Posterior vena cava (tissue), 2 donors: ENCODE measurements at regions of chr9 and their contacts with region 1.

Region 1: DNA sequence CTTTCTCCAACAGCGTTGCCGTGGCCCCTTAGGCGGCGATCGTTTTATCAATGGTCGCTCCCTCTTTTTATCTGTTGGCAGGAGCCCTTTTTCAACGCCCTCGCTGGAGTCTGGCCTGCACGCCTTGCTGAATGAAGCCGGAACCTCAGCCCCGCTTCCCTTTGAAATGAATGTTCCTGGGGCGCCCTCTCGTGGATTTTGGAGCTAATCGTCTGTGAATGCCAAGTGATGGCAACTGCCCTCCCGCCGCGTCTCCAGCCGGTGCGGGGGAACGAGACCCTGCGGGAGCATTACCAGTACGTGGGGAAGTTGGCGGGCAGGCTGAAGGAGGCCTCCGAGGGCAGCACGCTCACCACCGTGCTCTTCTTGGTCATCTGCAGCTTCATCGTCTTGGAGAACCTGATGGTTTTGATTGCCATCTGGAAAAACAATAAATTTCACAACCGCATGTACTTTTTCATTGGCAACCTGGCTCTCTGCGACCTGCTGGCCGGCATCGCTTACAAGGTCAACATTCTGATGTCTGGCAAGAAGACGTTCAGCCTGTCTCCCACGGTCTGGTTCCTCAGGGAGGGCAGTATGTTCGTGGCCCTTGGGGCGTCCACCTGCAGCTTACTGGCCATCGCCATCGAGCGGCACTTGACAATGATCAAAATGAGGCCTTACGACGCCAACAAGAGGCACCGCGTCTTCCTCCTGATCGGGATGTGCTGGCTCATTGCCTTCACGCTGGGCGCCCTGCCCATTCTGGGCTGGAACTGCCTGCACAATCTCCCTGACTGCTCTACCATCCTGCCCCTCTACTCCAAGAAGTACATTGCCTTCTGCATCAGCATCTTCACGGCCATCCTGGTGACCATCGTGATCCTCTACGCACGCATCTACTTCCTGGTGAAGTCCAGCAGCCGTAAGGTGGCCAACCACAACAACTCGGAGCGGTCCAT is 10.0 kb downstream of the S1PR3 start:
- DNase-seq: peak; percentile 96

Region 2: GRCh38 chr9:88593537-88594185 is 407.6 kb before region 1 on chr9:
- intact Hi-C with region 1: loop called (anchors 2 to 5 kb)
- DNase-seq: no peak

Region 3: DNA sequence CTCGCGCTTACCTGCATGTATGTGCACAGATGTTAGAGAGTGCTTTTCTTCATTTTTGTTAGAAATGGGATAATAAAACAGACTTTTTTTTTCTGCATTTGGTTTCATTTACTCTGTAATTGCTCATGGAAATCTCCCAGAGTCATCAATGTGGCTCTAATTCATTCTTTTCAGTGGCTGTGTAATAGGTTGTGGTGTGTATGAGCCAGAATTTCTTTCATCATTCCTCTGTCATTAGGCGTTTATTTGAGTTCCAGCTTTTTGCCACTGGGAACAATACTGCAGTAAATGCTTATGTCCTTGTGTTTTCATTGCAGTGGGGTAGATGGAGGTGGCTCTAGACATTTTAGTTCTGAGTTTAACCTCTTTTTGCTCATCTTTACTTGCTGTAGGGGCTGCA is 347.3 kb before region 1 on chr9:
- intact Hi-C with region 1: loop called in 1 of 2 experiments (anchors 2 kb)
- DNase-seq: no peak

Region 4: DNA sequence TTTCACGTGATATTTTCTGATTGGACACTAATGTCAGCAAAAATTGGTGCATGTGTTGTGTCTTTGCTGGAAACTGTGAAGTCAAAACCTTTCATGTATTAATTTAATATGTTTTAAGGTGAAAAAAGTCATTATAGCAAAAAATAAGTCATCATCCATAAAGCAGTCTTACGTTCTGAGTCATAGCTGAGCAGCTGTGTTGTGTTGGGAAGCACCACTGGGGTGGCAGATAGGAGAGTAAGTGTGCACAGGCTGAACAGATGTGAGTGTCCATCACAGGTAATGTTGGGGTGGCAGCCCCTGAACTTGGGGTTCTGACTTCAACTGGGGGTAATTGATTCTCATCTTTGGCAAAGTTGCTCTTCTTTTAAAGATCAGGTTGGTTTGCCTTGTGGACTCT is 309.4 kb before region 1 on chr9:
- intact Hi-C with region 1: no loop called
- DNase-seq: no peak

Region 5: DNA sequence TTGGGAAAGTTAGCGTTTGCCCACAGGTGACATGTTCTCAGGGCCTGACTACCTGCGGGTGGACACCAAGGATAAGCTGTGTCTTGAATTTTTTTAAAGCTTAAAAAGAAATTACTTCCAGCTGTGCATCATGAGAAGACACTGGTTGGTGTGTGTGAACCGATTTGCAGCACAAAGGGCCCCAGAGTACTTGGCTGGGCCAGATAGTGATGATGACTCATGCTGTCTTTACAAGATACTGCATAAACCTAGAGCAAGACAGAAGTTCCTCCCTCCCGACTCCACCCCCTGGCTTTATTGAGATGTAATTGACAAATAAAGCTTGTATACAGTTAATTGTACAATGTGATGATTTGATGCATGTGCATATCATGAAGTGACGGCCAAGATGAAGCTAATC is 253.5 kb before region 1 on chr9:
- intact Hi-C with region 1: loop called in 1 of 2 experiments (anchors 1 kb)
- DNase-seq: no peak

Region 6: DNA sequence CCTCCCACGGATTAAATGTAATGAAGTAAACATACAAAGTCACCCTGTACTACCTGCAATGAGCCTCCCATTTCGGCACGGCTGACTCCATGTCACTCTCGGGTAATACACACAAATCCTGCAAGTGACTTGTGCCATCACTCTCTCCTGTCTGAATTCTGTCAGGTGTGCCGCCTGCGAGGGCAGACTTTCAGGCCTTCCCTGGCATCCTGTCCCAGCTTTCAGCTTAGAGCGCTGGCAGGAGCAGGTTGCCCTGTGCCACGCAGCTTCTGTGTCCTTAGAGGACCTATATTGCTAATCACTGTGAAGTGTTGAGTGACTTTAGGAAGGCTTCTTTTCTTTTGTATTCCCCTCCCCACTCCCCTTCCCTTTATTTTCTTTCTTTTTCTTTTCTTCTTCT is 35.8 kb before region 1 on chr9:
- intact Hi-C with region 1: no loop called
- DNase-seq: no peak